MCF 10A (cell line): ENCODE measurements at regions of chr12 and their contacts with region 1.

Region 1: DNA sequence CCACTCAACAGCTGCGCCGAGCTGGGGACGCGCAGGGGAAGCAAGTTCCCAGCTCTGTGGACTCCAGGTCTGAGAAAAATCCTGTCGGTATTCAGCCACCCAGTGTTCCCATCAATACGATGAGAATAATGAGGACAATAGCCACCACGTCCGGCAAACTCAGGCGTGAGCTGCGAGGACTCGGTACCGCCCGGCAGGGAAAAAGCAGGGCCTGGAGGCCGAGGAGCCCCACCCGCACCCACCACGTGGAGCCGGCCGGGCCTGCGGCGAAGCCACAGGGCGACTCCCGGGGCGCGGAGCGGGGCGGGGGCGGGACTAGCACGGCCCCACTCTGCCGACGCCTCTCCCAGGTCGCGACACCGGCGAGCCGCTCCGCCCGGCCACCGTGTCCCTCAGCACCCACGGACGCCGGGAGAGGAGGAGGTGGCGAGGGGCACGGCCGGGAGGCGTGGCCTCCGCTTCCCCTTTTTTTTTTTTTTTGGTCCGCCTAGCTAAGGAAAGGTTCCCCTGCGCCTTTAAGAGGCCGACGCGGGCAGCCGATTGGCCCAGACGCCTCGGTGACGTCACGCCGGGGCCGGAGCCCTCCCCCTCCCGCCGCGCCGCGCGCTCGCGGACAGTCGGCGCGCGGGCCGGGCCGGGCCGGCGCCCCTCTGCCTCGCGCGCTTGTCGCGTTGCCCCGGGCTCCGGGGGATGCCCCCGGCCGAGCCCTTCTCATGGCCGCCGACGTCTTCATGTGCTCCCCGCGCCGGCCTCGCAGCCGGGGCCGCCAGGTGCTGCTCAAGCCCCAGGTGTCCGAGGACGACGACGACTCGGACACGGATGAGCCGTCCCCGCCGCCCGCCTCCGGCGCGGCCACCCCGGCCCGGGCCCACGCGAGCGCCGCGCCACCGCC is at the start of gene MLXIP:
- DNase-seq: peak; percentile 91
- H3K4me3 Mint-ChIP-seq: peak within 1 kb of the TSS; percentile 74
- H3K27ac Mint-ChIP-seq: peak within 1 kb of the TSS; percentile 43
- H3K4me1 Mint-ChIP-seq: peaks cover 18% of the 10 kb centered on the region
- H3K27me3 Mint-ChIP-seq: no peaks in the 10 kb centered on the region
- CTCF ChIP-seq: no peak
- total RNA-seq, gene MLXIP: 34.2 and 35.6 TPM in 2 replicates

Region 2: GRCh38 chr12:121802846-121803630 is 275.3 kb before region 1 on chr12:
- CTCF ChIA-PET with region 1: interaction called, 3 read pairs
- POLR2A ChIA-PET with region 1: interaction called, 10 read pairs
- intact Hi-C with region 1: no loop called
- DNase-seq: peak; percentile 96
- H3K4me3 Mint-ChIP-seq: peak overlapping the region; percentile 87
- H3K27ac Mint-ChIP-seq: peak overlapping the region; percentile 99
- H3K4me1 Mint-ChIP-seq: peaks cover 13% of the 10 kb centered on the region
- H3K27me3 Mint-ChIP-seq: no peaks in the 10 kb centered on the region
- CTCF ChIP-seq: no peak

Region 3: GRCh38 chr12:121894633-121895032 is 183.8 kb before region 1 on chr12:
- CTCF ChIA-PET with region 1: no interaction called
- POLR2A ChIA-PET with region 1: no interaction called
- intact Hi-C with region 1: no loop called
- DNase-seq: no peak
- H3K4me3 Mint-ChIP-seq: peak overlapping the region; percentile 59
- H3K27ac Mint-ChIP-seq: peak overlapping the region; percentile 97
- H3K4me1 Mint-ChIP-seq: peaks cover 25% of the 10 kb centered on the region
- H3K27me3 Mint-ChIP-seq: no peaks in the 10 kb centered on the region
- CTCF ChIP-seq: no peak

Region 4: GRCh38 chr12:121996945-121997612 is 81.3 kb before region 1 on chr12:
- CTCF ChIA-PET with region 1: no interaction called
- POLR2A ChIA-PET with region 1: no interaction called
- intact Hi-C with region 1: no loop called
- DNase-seq: peak; percentile 44
- H3K4me3 Mint-ChIP-seq: no peak overlapping the region
- H3K27ac Mint-ChIP-seq: no peak overlapping the region
- H3K4me1 Mint-ChIP-seq: peaks cover 11% of the 10 kb centered on the region
- H3K27me3 Mint-ChIP-seq: no peaks in the 10 kb centered on the region
- CTCF ChIP-seq: no peak

Region 5: GRCh38 chr12:122021822-122022526 is 56.4 kb before region 1 on chr12 and contains the start of gene BCL7A:
- CTCF ChIA-PET with region 1: no interaction called
- POLR2A ChIA-PET with region 1: interaction called, 13 read pairs
- intact Hi-C with region 1: no loop called
- DNase-seq: peak; percentile 60
- H3K4me3 Mint-ChIP-seq: peak within 1 kb of the TSS; percentile 94
- H3K27ac Mint-ChIP-seq: peak within 1 kb of the TSS; percentile 76
- H3K4me1 Mint-ChIP-seq: peaks cover 5% of the 10 kb centered on the region
- H3K27me3 Mint-ChIP-seq: no peaks in the 10 kb centered on the region
- CTCF ChIP-seq: no peak
- total RNA-seq, gene BCL7A: 17.9 and 18.1 TPM in 2 replicates

Region 6: DNA sequence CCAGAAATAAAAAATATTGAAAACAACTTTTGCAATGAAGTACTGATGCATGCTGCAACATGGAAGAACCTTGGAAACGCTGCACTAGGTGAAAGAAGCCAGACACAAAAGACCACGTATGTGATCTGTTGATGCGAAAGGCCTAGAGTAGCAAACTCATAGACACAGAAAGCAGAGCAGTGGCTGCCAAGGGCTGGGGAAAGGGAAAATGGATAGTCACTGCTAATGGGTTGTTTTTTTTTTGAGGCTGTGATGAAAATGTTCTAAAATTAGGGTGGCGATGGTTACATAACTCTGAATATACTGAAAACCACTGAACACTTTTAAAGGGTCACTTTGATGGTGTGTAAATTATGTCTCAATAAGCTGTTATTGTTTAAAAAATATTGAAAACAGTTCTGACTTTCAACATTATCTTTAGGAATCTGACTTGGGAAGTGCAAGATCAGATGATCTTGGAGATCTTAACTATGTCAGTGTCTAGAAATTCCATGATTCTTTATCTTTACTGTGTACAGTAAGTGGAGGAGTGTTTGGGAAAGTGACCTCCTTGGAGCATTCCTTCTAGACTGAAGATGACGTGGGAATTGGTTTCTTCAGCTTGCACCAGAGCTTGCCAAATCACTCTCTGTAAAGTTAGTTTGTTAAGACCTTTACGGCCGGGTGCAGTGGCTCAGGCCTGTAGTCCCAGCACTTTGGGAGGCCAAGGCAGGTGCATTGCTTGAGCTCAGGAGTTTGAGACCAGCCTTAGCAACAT is 12.6 kb after region 1 on chr12:
- CTCF ChIA-PET with region 1: interaction called, 6 read pairs
- POLR2A ChIA-PET with region 1: interaction called, 206 read pairs
- intact Hi-C with region 1: no loop called
- DNase-seq: no peak
- H3K4me3 Mint-ChIP-seq: no peak overlapping the region
- H3K27ac Mint-ChIP-seq: peak overlapping the region; percentile 75
- H3K4me1 Mint-ChIP-seq: peaks cover 7% of the 10 kb centered on the region
- H3K27me3 Mint-ChIP-seq: no peaks in the 10 kb centered on the region
- CTCF ChIP-seq: no peak

Region 7: DNA sequence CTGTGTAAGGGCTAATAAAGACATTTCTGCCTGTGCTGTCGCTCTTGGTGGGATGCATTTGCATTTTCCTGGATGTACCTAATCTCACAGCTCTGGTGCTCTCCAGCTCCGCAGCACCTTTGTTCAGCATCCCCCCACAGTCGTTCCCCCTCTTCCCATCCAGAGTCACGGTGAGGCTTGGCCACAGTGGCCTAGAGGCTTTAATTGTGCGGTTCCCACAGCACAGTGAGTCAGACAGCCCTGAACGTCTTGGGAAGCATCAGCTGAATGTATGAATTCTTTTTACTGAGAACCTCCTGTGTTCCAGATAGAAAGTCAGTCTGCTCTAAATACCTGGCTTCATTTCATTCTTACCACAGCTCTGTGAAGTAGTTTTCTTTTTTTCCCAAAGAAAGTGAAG is 28.9 kb after region 1 on chr12:
- CTCF ChIA-PET with region 1: interaction called, 14 read pairs
- POLR2A ChIA-PET with region 1: interaction called, 110 read pairs
- intact Hi-C with region 1: no loop called
- DNase-seq: peak; percentile 40
- H3K4me3 Mint-ChIP-seq: no peak overlapping the region
- H3K27ac Mint-ChIP-seq: peak overlapping the region; percentile 50
- H3K4me1 Mint-ChIP-seq: peaks cover 36% of the 10 kb centered on the region
- H3K27me3 Mint-ChIP-seq: no peaks in the 10 kb centered on the region
- CTCF ChIP-seq: no peak

Region 8: GRCh38 chr12:122225683-122226407 is 147.5 kb after region 1 on chr12 and contains the start of gene DIABLO:
- CTCF ChIA-PET with region 1: no interaction called
- POLR2A ChIA-PET with region 1: interaction called, 18 read pairs
- intact Hi-C with region 1: no loop called
- DNase-seq: peak; percentile 99
- H3K4me3 Mint-ChIP-seq: peak within 1 kb of the TSS; percentile 92
- H3K27ac Mint-ChIP-seq: peak within 1 kb of the TSS; percentile 96
- H3K4me1 Mint-ChIP-seq: peaks cover 16% of the 10 kb centered on the region
- H3K27me3 Mint-ChIP-seq: no peaks in the 10 kb centered on the region
- CTCF ChIP-seq: no peak
- total RNA-seq, gene DIABLO: 69.6 and 70.1 TPM in 2 replicates